CD14-positive monocyte (primary cell): ENCODE measurements at regions of chrX and their contacts with region 1.

Region 1: GRCh38 chrX:53093748-53094583 is at the start of gene KANTR:
- DNase-seq: peak; percentile 84 to 88 (median 86)
- H3K4me3 ChIP-seq: peak within 1 kb of the TSS; percentile 70 to 80 (median 78)
- H3K4me3 Mint-ChIP-seq: peak within 1 kb of the TSS; percentile 82 to 90
- H3K27ac ChIP-seq: peak within 1 kb of the TSS; percentile 67 to 75
- H3K27ac Mint-ChIP-seq: peak within 1 kb of the TSS; percentile 79 to 94 (median 89)
- H3K4me1 ChIP-seq: peaks cover 10 to 16% of the 10 kb centered on the region in 2 donors
- H3K4me1 Mint-ChIP-seq: peaks cover 15% of the 10 kb centered on the region
- H3K27me3 ChIP-seq: no peaks in the 10 kb centered on the region
- H3K27me3 Mint-ChIP-seq: peaks cover 2 to 13% (median 4%) of the 10 kb centered on the region in 3 donors
- CTCF ChIP-seq: no peak
- polyA plus RNA-seq, gene KANTR: 0.32 to 4.3 (median 0.44) TPM

Region 2: DNA sequence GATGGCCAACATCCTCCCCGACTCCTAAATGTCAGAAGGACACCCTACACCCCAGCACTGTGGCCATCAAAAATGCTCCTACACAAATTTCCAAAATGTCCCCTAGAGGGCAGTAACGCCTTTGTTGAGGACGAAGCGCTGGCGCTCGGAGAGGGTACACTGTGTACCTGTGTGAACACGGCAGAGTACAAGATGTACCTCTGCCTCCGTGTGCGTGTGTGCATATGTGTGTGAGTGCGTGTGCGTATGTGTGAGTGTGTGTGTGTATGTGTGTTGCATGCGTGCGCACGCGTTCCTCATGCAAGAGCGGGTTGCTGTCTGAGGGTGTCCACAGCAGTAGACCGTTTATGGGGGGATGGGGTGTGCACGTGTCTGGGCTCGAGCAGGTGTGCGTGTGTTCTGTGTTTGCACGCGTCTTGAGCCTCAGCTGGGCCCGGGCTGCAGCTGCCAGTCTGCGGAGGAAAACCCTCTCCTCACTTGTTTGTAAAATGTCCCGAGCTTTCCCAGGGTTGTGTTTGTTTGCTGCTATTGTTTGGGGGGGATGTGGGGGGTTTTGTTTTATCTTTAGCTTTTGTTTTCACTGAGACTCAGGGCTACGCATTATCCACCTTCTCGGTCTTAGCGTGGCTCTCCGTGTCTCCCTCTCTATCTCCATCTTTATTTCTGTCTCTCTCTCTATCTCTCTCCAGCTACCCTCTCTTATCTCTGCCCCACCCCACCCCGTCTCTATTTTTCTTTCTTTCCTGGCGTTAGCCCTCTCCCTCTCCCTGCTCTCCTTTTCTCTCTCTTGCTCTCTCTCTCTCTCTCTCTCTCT is 22.2 kb before region 1 on chrX:
- intact Hi-C with region 1: loop called in 1 of 2 experiments (anchors 2 kb)
- DNase-seq: peak; percentile 40 to 62 (median 59)
- H3K4me3 ChIP-seq: peak overlapping the region; percentile 11 to 68 (median 48)
- H3K4me3 Mint-ChIP-seq: peak overlapping the region; percentile 74 to 95
- H3K27ac ChIP-seq: no peak overlapping the region
- H3K27ac Mint-ChIP-seq: peak overlapping the region in 1 of 7 donors; percentile 47
- H3K4me1 ChIP-seq: peaks cover 10 to 13% of the 10 kb centered on the region in 2 donors
- H3K4me1 Mint-ChIP-seq: peaks cover 10% of the 10 kb centered on the region
- H3K27me3 ChIP-seq: no peaks in the 10 kb centered on the region
- H3K27me3 Mint-ChIP-seq: peaks cover 2 to 17% (median 3%) of the 10 kb centered on the region in 3 donors
- CTCF ChIP-seq: peak; percentile 70

Region 3: DNA sequence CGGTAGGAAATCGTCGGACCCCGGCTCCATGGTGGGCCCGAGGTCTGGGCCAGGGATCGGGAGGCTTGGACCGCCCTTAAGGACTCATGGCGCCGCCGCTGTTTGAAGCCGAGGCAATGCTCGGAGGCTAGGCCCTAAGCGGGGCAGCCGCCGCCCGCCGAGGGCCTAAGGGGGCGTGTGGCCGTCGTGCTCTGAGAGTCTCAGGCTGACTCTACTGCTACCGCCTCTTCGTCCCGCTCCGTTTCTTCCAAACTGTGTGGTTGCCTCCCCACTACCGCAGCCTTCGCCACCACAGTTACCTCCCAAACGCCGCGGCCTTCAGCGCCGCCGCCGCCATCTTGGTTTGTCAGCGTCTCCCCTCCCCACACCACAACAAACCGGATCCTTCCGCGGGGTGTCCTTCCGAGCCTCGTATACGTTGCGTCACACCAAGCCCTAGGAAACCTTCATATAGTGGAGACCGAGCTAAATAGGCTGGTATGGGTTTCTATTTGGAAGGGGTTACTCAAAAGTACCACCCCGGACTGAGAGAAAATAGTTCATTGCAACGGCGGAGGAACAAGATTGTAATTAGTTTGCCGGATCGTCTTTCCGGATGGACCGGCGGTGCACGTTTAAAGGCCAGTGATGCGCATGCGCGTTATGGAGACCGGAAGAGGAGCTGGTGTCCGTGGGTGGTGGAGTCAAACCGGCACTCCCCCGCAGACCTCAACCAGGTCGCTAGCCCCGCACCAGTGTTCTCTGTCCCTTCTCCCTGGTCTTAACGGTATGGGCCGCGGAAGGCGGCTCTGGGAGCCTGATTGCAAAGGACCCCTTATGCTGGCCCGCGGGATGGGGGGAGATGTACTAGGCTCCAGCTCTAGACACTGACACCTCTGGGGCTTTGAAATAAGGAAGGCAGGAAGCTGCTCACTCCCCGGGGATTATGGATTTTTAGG is 131.2 kb after region 1 on chrX and contains the start of gene KDM5C:
- intact Hi-C with region 1: loop called in 1 of 2 experiments (anchors 10 kb)
- DNase-seq: peak; percentile 83 to 95 (median 91)
- H3K4me3 ChIP-seq: peak within 1 kb of the TSS; percentile 74 to 92 (median 80)
- H3K4me3 Mint-ChIP-seq: peak within 1 kb of the TSS; percentile 89 to 95
- H3K27ac ChIP-seq: peak within 1 kb of the TSS; percentile 67 to 99
- H3K27ac Mint-ChIP-seq: peak within 1 kb of the TSS; percentile 95 to 100 (median 98)
- H3K4me1 ChIP-seq: peaks cover 37 to 42% of the 10 kb centered on the region in 2 donors
- H3K4me1 Mint-ChIP-seq: peaks cover 33% of the 10 kb centered on the region
- H3K27me3 ChIP-seq: no peaks in the 10 kb centered on the region
- H3K27me3 Mint-ChIP-seq: peaks cover 0 to 13% (median 0%) of the 10 kb centered on the region in 3 donors
- CTCF ChIP-seq: no peak
- polyA plus RNA-seq, gene KDM5C: 13.3 to 93.6 (median 16.7) TPM